ENCODE measurements at regions of chr19 and their contacts with region 1.

Region 1: GRCh38 chr19:12806239-12807081 is at the start of gene RNASEH2A:
- DNase-seq: peak; percentile 71
- ATAC-seq: peak; percentile 86
- H3K4me3 ChIP-seq: peak within 1 kb of the TSS; percentile 82 to 89
- H3K27ac ChIP-seq: peak within 1 kb of the TSS; percentile 72
- H3K4me1 ChIP-seq: peaks cover 14 to 26% of the 10 kb centered on the region in 2 experiments; a peak in 3 of 4 replicates
- H3K27me3 ChIP-seq: no peaks in the 10 kb centered on the region
- CTCF ChIP-seq: no peak
- POLR2A ChIP-seq: peak; percentile 83
- RAD21 ChIP-seq: no peak
- total RNA-seq, gene RNASEH2A: 54.5 TPM

Region 2: DNA sequence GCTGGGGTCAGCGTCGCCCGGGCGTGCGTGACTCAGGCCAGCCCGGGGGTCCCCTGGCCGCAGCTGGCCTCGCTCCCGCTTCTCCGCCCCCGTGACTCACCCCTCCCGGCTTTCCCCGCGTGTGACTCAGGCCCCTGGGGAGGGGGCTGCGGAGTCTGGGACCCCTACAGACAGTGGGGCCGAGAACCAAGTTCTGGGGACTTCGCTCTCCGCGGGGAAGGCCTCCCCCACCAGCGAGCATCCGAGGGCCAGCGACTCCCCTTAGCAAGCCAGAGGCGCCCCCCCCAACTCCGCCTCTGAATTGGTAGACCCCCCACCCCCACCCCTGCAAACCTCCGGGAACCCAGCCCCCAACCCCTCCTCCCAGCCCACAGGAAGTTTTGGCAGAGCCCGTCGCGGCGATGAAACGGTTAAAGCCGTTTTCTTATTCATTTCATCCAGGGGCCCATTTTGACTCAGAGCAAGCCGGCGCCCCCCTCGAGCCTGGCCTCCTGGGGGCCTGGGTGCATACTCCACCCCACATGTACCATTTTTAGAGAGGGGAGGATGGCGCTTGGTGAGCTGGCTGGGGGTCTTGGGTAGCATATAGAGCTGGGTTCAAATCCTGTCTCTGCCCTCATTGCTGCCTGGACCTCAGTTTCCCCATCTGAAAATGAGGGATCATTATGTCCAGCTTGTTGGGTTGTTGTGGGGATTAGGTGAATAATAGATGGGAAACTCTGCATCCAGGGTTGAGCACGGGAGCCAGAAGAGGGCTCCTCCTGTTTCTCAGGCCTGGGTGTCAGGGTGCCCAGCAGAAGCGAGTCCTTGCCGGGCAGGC is 23.2 kb before region 1 on chr19:
- CTCF ChIA-PET with region 1: no interaction called
- POLR2A ChIA-PET with region 1: no interaction called
- RAD21 ChIA-PET with region 1: no interaction called
- intact Hi-C with region 1: no loop called
- DNase-seq: no peak
- ATAC-seq: no peak
- H3K4me3 ChIP-seq: peak overlapping the region; percentile 43 to 58
- H3K27ac ChIP-seq: peak overlapping the region; percentile 89
- H3K4me1 ChIP-seq: peaks cover 76 to 90% of the 10 kb centered on the region in 2 experiments
- H3K27me3 ChIP-seq: no peaks in the 10 kb centered on the region
- CTCF ChIP-seq: no peak
- POLR2A ChIP-seq: no peak
- RAD21 ChIP-seq: no peak

Region 3: DNA sequence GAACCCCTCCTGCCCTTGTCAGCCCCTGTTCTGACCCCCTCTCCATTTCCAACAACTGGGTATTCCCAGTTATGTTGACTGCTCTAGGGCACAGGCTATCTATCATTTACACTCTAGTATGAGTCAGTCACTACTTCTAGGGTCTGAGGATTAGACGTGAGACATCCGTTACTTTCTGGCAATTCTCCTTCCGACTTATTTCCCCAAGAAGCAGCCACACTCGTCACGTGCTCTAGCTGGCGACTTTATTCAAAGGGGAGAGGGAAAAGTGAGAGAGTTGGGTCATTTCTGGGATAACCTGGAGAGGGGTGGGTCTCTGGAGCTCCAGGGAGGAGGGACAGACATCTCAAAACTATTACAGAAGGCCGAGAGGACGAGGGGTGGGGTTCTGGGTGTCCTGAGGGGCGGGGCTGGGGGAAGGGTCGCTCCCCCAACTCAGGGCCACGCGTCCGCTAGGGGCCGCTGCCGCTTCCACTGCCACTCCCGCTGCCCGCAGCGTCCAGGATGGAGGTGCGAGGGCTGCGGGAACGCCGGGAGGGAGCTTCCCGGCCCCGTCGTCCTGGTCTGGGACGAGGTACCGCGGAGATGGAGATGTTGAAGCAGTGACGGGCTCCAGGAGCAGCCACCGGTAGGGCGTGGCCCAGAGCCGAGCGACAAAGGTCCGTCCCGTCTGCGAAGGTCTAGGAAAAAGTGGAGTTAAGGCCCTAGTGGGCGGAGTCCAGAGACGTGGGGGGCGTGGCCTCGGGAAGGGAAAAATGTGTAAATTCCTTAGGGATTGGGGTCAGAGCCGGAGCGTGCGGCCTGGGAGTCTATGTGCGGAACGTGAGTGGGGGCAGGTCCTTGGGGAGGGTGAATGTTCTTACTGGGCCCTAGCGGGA is 19.0 kb after region 1 on chr19:
- CTCF ChIA-PET with region 1: interaction called, 12 read pairs
- POLR2A ChIA-PET with region 1: no interaction called
- RAD21 ChIA-PET with region 1: no interaction called
- intact Hi-C with region 1: no loop called
- DNase-seq: no peak
- ATAC-seq: peak; percentile 90
- H3K4me3 ChIP-seq: peak overlapping the region; percentile 36 to 40
- H3K27ac ChIP-seq: peak overlapping the region; percentile 59
- H3K4me1 ChIP-seq: peaks cover 8 to 22% of the 10 kb centered on the region in 2 experiments
- H3K27me3 ChIP-seq: no peaks in the 10 kb centered on the region
- CTCF ChIP-seq: peak; percentile 44 to 77 (median 74); a peak in 5 of 6 replicates
- POLR2A ChIP-seq: no peak
- RAD21 ChIP-seq: 0 out of 2 replicates have a peak, but pooled peaks have one; percentile 26

Region 4: DNA sequence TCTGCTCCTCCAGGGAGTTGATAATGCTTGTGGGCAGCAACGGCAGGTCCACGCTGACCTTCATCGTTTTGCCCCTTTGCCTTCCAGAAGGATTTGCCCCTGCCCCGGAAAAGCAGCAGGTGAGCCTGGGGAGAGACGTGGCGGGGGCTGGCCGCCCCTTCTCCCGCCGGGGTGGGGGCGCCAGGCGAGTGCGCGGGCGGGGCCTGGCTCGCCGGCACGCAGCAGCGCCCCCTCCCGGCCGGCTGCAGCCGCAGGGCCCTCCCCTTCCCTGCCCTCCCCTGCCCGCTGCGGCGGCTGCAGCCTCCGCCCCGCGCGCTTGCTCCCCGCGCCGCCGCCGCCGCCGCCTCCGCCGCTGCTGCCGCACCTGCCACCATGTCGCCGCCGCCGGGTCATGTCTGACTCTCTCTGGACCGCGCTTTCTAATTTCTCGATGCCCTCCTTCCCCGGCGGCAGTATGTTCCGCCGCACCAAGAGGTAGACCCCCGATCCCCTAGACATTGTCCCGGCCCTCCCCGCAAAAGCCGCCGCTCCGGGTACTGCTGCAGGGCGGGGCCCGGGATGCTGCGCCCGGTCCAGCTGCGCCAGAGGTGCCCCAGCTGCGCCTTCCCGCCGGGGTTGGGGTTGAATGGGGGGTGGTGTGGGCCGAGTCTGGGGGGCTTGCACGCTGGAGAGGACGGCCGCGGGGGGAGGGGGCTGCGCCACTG is 31.9 kb after region 1 on chr19 and contains the start of gene MAST1:
- CTCF ChIA-PET with region 1: no interaction called
- POLR2A ChIA-PET with region 1: interaction called, 6 read pairs
- RAD21 ChIA-PET with region 1: no interaction called
- intact Hi-C with region 1: loop called (anchors 5 kb)
- DNase-seq: no peak
- ATAC-seq: peak; percentile 50
- H3K4me3 ChIP-seq: peak within 1 kb of the TSS; percentile 61 to 88
- H3K27ac ChIP-seq: peak within 1 kb of the TSS; percentile 69
- H3K4me1 ChIP-seq: peaks cover 39 to 67% of the 10 kb centered on the region in 2 experiments
- H3K27me3 ChIP-seq: no peaks in the 10 kb centered on the region
- CTCF ChIP-seq: peak in 2 of 3 experiments; percentile 45 to 53; a peak in 4 of 6 replicates
- POLR2A ChIP-seq: no peak
- RAD21 ChIP-seq: no peak
- total RNA-seq, gene MAST1: 28.9 TPM